ENCODE measurements at regions of chr15 and their contacts with region 1.

Region 1: GRCh38 chr15:98727115-98728085 is 79.1 kb downstream of the IGF1R start:
- DNase-seq: no peak
- ATAC-seq: no peak
- H3K4me3 ChIP-seq: no peak overlapping the region
- H3K4me3 Mint-ChIP-seq: peak overlapping the region in 7 of 10 donors; percentile 29 to 53 (median 40)
- H3K27ac ChIP-seq: no peak overlapping the region
- H3K27ac Mint-ChIP-seq: peak overlapping the region in 2 of 9 donors; percentile 48 to 73
- H3K4me1 ChIP-seq: peaks cover 0 to 8% of the 10 kb centered on the region in 2 donors
- H3K4me1 Mint-ChIP-seq: peaks cover 13 to 79% (median 71%) of the 10 kb centered on the region in 7 donors
- H3K27me3 ChIP-seq: no peaks in the 10 kb centered on the region
- H3K27me3 Mint-ChIP-seq: no peaks in the 10 kb centered on the region

Region 2: DNA sequence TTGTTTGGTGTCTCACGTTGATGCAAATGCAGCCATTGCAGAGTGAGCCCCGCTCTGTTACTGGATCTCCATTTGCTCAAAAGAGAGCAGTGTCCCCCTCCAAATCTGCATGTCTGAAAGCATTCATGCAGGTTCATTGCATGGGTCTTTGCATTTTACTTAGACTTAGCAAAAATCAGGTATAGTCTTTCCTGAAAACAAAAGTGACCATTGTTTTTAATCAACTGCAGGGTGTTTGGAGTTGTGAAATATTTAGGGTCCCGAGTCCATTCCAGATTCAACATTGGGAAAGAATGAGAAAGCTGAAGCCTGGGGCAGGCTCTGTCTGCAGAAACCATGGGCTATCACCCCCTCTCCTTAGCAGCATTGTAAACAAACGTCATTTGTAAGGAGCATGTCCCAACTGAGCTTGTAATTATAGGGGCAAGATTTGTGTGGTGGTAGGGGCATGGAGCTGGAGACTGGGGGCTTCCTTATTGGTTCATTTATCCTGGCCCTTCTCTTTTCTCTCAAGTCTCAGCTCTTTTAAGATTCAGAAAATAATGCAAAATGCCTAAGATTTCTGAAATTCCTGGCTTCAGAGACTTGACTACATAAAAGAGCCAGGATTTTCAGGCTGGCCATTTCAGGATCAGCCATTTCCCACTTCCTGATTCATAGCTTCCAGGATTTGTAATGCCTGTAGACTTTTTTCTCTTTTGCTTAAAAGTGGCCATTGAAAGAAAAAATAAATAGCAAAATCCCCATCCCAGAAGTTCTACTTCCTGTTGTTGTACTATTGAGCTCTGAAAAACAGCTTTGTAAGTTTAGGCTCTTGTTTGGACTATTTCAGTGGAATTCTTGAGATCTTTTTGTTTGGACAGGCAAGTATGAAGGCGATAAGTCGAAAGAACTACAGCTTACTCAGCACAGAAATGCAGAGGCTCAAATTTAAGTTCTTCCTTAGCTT is 56.1 kb before region 1 on chr15:
- CTCF ChIA-PET with region 1: no interaction called
- POLR2A ChIA-PET with region 1: no interaction called
- intact Hi-C with region 1: loop called in 1 of 2 experiments (anchors 10 kb)
- DNase-seq: no peak
- ATAC-seq: no peak
- H3K4me3 ChIP-seq: no peak overlapping the region
- H3K4me3 Mint-ChIP-seq: peak overlapping the region in 6 of 10 donors; percentile 19 to 68 (median 37)
- H3K27ac ChIP-seq: no peak overlapping the region
- H3K27ac Mint-ChIP-seq: peak overlapping the region in 4 of 9 donors; percentile 28 to 85 (median 60)
- H3K4me1 ChIP-seq: peaks cover 0 to 50% of the 10 kb centered on the region in 2 donors
- H3K4me1 Mint-ChIP-seq: peaks cover 43 to 87% (median 83%) of the 10 kb centered on the region in 7 donors
- H3K27me3 ChIP-seq: no peaks in the 10 kb centered on the region
- H3K27me3 Mint-ChIP-seq: no peaks in the 10 kb centered on the region

Region 3: DNA sequence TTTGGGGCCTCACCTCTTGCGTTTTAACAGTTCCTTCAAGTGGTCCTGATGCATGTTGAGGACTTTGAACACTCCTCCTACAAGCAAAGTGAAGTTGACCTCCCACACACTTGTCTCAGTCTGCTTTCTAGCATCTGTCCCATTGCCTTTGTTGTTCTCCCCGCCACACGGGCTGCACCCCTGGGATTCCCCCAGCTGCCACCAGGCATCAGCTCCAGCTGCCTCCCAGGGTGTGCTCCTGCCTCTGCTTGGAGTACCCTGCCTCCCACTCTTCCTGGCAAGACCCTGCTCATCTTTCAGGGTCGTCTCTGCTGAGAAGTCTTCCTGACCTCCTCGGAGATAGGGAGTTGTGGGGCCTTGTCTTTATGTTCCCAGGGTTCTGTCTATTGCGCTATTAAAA is 26.9 kb before region 1 on chr15:
- CTCF ChIA-PET with region 1: no interaction called
- POLR2A ChIA-PET with region 1: no interaction called
- intact Hi-C with region 1: no loop called
- DNase-seq: no peak
- ATAC-seq: peak; percentile 18
- H3K4me3 ChIP-seq: no peak overlapping the region
- H3K4me3 Mint-ChIP-seq: peak overlapping the region in 6 of 10 donors; percentile 8 to 71 (median 60)
- H3K27ac ChIP-seq: no peak overlapping the region
- H3K27ac Mint-ChIP-seq: peak overlapping the region in 7 of 9 donors; percentile 34 to 83 (median 66)
- H3K4me1 ChIP-seq: peaks cover 0 to 56% of the 10 kb centered on the region in 2 donors
- H3K4me1 Mint-ChIP-seq: peaks cover 37 to 61% (median 56%) of the 10 kb centered on the region in 7 donors
- H3K27me3 ChIP-seq: peaks cover 0 to 3% of the 10 kb centered on the region in 2 donors
- H3K27me3 Mint-ChIP-seq: no peaks in the 10 kb centered on the region

Region 4: GRCh38 chr15:98715853-98716443 is 11.5 kb before region 1 on chr15:
- CTCF ChIA-PET with region 1: interaction called, 3 read pairs
- POLR2A ChIA-PET with region 1: no interaction called
- intact Hi-C with region 1: loop called in 1 of 2 experiments (anchors 2 kb)
- DNase-seq: peak in 6 of 9 donors; percentile 17 to 40 (median 31)
- ATAC-seq: peak; percentile 45
- H3K4me3 ChIP-seq: peak overlapping the region; percentile 29
- H3K4me3 Mint-ChIP-seq: peak overlapping the region; percentile 29 to 78 (median 68)
- H3K27ac ChIP-seq: no peak overlapping the region
- H3K27ac Mint-ChIP-seq: peak overlapping the region; percentile 18 to 86 (median 69)
- H3K4me1 ChIP-seq: peaks cover 0 to 60% of the 10 kb centered on the region in 2 donors
- H3K4me1 Mint-ChIP-seq: peaks cover 48 to 94% (median 87%) of the 10 kb centered on the region in 7 donors
- H3K27me3 ChIP-seq: no peaks in the 10 kb centered on the region
- H3K27me3 Mint-ChIP-seq: no peaks in the 10 kb centered on the region